ENCODE measurements at regions of chr1 and their contacts with region 1.

Region 1: DNA sequence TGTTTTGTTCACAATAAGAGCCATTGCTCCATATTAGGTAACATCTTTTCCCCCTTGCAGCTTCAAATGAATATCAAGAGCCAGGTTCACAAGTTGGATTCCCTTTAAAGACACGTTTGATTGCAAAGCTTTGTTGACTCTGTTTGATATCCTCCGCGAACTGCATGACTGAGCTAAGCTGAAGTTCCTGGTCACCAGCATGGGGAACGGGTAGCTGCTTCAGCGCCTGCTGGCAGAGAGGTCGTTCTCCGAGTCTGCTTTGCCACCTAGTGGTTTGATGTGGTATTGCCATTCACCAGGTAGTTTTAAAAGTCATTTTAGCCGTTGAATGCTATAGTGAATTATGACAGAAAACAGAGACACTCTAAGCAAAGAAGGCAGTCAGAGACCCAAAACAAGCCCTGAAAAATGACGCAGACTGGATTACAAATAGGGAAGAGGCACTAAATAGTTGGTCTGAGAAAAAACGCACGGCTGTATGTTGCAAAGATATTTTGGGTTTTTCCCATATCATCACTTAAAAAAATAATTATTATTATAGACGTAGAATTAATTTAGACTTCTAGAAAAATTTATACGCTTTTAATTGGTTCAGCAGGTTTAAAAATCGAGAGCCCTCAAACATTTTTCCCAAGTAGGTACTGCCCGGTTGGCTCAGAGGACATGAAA is 193.5 kb upstream of the FMN2 start:
- DNase-seq: peak; percentile 70 to 85 (median 79)
- ATAC-seq: peak; percentile 88 to 98 (median 97)
- H3K4me3 ChIP-seq: peak overlapping the region in 1 of 4 donors; percentile 22
- H3K27ac ChIP-seq: no peak overlapping the region
- H3K4me1 ChIP-seq: peaks cover 9 to 14% (median 11%) of the 10 kb centered on the region in 3 donors
- H3K27me3 ChIP-seq: no peaks in the 10 kb centered on the region
- CTCF ChIP-seq: peak; percentile 88 to 92 (median 90)

Region 2: GRCh38 chr1:239413916-239414315 is 484.3 kb before region 1 on chr1:
- intact Hi-C with region 1: loop called in 1 of 3 experiments (anchors 10 kb)
- DNase-seq: no peak
- ATAC-seq: no peak
- H3K4me3 ChIP-seq: no peak overlapping the region
- H3K27ac ChIP-seq: no peak overlapping the region
- H3K4me1 ChIP-seq: peaks cover 5 to 11% (median 9%) of the 10 kb centered on the region in 3 donors
- H3K27me3 ChIP-seq: no peaks in the 10 kb centered on the region
- CTCF ChIP-seq: no peak

Region 3: GRCh38 chr1:239711768-239712167 is 186.4 kb before region 1 on chr1:
- intact Hi-C with region 1: no loop called
- DNase-seq: no peak
- ATAC-seq: no peak
- H3K4me3 ChIP-seq: no peak overlapping the region
- H3K27ac ChIP-seq: no peak overlapping the region
- H3K4me1 ChIP-seq: peaks cover 0 to 2% (median 0%) of the 10 kb centered on the region in 3 donors
- H3K27me3 ChIP-seq: no peaks in the 10 kb centered on the region
- CTCF ChIP-seq: no peak

Region 4: DNA sequence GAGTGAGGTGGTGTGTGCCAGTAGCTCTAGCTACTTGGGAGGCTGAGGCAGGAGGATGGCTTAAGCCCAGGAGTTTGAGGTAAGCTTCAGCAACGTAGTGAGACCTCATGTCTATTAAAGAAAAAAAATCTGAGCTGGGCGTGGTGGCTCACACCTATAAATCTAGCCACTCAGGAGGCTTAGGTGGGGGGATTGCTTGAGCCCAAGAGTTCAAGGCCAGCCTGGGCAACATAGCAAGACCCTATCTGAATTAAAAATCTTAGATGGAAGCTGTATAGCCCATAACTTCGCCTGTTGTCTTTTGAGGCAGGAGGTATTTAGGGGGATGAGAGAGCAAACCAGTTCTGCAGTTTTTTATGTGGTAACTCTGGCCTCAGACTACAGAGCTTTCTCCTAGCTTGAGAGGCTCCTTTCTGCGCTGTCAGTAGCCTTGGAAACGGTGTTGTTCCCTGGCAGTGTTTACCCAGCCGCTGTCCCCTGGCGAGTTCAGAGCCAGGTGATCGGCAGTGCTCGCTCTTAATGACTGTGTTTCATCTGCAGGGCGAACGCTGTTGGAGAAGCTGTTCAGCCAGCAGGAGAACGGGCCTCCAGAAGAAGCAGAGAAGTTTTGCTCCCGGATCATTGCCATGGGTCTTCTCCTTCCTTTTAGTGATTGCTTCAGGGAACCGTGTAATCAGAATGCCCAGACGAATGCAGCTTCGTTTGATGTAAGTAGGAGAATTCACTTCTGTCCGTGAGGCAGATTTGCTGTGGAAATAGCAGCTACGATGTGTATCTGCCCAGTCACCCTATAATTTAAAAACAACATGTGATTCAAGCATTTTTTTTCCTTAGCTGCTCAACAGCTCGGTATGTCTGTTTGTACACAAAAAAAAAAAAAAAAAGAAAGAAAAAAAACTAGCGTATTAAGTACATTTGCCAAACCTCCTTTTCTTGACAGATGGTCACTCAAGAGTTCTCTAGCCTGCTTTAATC is 224.7 kb after region 1 on chr1:
- intact Hi-C with region 1: no loop called
- DNase-seq: peak in 5 of 6 donors; percentile 26 to 59 (median 42)
- ATAC-seq: peak; percentile 84 to 99 (median 94)
- H3K4me3 ChIP-seq: no peak overlapping the region
- H3K27ac ChIP-seq: peak overlapping the region in 1 of 4 donors; percentile 18
- H3K4me1 ChIP-seq: no peaks in the 10 kb centered on the region
- H3K27me3 ChIP-seq: peaks cover 0 to 4% (median 0%) of the 10 kb centered on the region in 4 donors
- CTCF ChIP-seq: no peak

Measured in pancreas (tissue), 10 donors.